Activated CD4-positive, alpha-beta T cell treated with anti-CD3 and anti-CD28 coated beads for 36 hours (primary cell): ENCODE measurements at regions of chr12 and their contacts with region 1.

Region 1: GRCh38 chr12:47797441-47797840 is 22.3 kb downstream of the HDAC7 start:
- DNase-seq: peak; percentile 57
- ATAC-seq: peak; percentile 44
- H3K4me3 Mint-ChIP-seq: no peak overlapping the region
- H3K27ac Mint-ChIP-seq: peak overlapping the region; percentile 42
- H3K4me1 Mint-ChIP-seq: peaks cover 35% of the 10 kb centered on the region
- H3K27me3 Mint-ChIP-seq: no peaks in the 10 kb centered on the region

Region 2: DNA sequence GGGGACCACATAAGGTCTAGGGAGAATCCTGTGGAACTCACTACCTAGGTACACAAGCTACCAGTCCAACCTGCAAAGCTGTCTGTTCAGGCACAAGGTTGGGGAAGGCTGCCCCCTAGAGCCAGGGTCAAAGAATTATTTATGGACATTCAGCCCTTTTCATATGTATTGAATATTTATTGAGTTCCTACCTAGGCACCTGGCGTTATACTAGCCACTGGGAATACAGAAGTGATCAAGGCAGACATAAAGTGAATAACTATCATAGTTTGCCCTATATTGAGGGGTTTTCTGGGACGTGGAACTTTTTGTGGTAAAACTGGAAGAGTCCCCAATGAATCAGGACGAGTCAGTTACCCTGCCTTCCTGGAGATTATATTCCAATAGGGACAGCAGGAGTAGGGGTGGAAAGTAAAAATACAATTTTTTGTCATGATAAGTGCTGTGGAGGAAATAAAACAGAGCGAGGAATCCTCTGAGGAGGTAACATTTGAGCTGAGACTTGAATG is 30.2 kb before region 1 on chr12:
- CTCF ChIA-PET with region 1: interaction called, 11 read pairs
- POLR2A ChIA-PET with region 1: no interaction called
- intact Hi-C with region 1: no loop called
- DNase-seq: peak; percentile 88
- ATAC-seq: peak; percentile 89
- H3K4me3 Mint-ChIP-seq: no peak overlapping the region
- H3K27ac Mint-ChIP-seq: no peak overlapping the region
- H3K4me1 Mint-ChIP-seq: no peaks in the 10 kb centered on the region
- H3K27me3 Mint-ChIP-seq: peaks cover 4% of the 10 kb centered on the region

Region 3: GRCh38 chr12:47786662-47787280 is 10.7 kb before region 1 on chr12:
- CTCF ChIA-PET with region 1: interaction called, 10 read pairs
- POLR2A ChIA-PET with region 1: no interaction called
- intact Hi-C with region 1: no loop called
- DNase-seq: no peak
- ATAC-seq: no peak
- H3K4me3 Mint-ChIP-seq: no peak overlapping the region
- H3K27ac Mint-ChIP-seq: peak overlapping the region; percentile 78
- H3K4me1 Mint-ChIP-seq: peaks cover 32% of the 10 kb centered on the region
- H3K27me3 Mint-ChIP-seq: no peaks in the 10 kb centered on the region

Region 4: GRCh38 chr12:47828608-47829536 is 31.4 kb after region 1 on chr12:
- CTCF ChIA-PET with region 1: interaction called, 13 read pairs
- POLR2A ChIA-PET with region 1: interaction called, 16 read pairs
- intact Hi-C with region 1: no loop called
- DNase-seq: peak; percentile 55
- ATAC-seq: no peak
- H3K4me3 Mint-ChIP-seq: peak overlapping the region; percentile 71
- H3K27ac Mint-ChIP-seq: peak overlapping the region; percentile 92
- H3K4me1 Mint-ChIP-seq: peaks cover 91% of the 10 kb centered on the region
- H3K27me3 Mint-ChIP-seq: no peaks in the 10 kb centered on the region